ENCODE measurements at regions of chr7 and their contacts with region 1.

Region 1: GRCh38 chr7:129503725-129504124 is 1.4 kb downstream of the SMKR1 start:
- DNase-seq: no peak
- H3K4me3 ChIP-seq: no peak overlapping the region
- H3K27ac ChIP-seq: no peak overlapping the region
- H3K4me1 ChIP-seq: no peaks in the 10 kb centered on the region
- H3K27me3 ChIP-seq: no peaks in the 10 kb centered on the region
- CTCF ChIP-seq: no peak

Region 2: GRCh38 chr7:129525225-129525862 is 21.6 kb after region 1 on chr7:
- CTCF ChIA-PET with region 1: no interaction called
- POLR2A ChIA-PET with region 1: no interaction called
- intact Hi-C with region 1: no loop called
- DNase-seq: no peak
- H3K4me3 ChIP-seq: no peak overlapping the region
- H3K27ac ChIP-seq: no peak overlapping the region
- H3K4me1 ChIP-seq: no peaks in the 10 kb centered on the region
- H3K27me3 ChIP-seq: no peaks in the 10 kb centered on the region
- CTCF ChIP-seq: no peak

Region 3: GRCh38 chr7:129536323-129536722 is 32.6 kb after region 1 on chr7:
- CTCF ChIA-PET with region 1: interaction called, 11 read pairs
- POLR2A ChIA-PET with region 1: no interaction called
- intact Hi-C with region 1: no loop called
- DNase-seq: no peak
- H3K4me3 ChIP-seq: no peak overlapping the region
- H3K27ac ChIP-seq: no peak overlapping the region
- H3K4me1 ChIP-seq: no peaks in the 10 kb centered on the region
- H3K27me3 ChIP-seq: no peaks in the 10 kb centered on the region
- CTCF ChIP-seq: no peak

Region 4: DNA sequence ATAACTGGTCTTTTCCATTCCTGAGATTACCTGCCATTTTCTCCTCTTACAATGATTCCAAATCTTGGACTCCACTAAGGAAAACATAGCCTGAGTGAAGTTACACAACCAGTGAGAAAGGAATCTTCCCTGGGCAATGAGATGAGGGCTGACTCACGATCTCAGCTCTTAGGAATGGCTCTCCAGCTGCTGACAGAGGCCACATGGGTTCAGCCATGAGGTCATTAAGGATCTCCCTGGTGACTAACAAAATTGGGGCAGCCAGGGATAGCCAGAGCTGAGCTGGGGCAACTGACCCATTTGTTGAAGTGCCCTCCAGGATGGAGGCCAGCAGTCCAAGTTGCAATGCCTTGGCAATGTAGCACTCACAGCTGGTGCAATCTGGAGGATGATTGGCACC is 1745.3 kb after region 1 on chr7:
- CTCF ChIA-PET with region 1: no interaction called
- POLR2A ChIA-PET with region 1: no interaction called
- intact Hi-C with region 1: no loop called
- DNase-seq: peak; percentile 17
- H3K4me3 ChIP-seq: no peak overlapping the region
- H3K27ac ChIP-seq: no peak overlapping the region
- H3K4me1 ChIP-seq: no peaks in the 10 kb centered on the region
- H3K27me3 ChIP-seq: no peaks in the 10 kb centered on the region
- CTCF ChIP-seq: no peak

Measured in A673 (cell line).